AG04450 (cell line): ENCODE measurements at regions of chr13 and their contacts with region 1.

Region 1: GRCh38 chr13:106536244-106537034 is 977 bp upstream of the EFNB2 start:
- DNase-seq: peak; percentile 72
- H3K4me3 ChIP-seq: peak overlapping the region; percentile 71
- H3K27ac ChIP-seq: no peak overlapping the region
- H3K27me3 ChIP-seq: no peaks in the 10 kb centered on the region
- CTCF ChIP-seq: peak; percentile 97

Region 2: GRCh38 chr13:104571161-104571892 is 1965.1 kb before region 1 on chr13:
- CTCF ChIA-PET with region 1: interaction called, 46 read pairs
- POLR2A ChIA-PET with region 1: no interaction called
- DNase-seq: peak; percentile 41
- H3K4me3 ChIP-seq: peak overlapping the region; percentile 33
- H3K27ac ChIP-seq: no peak overlapping the region
- H3K27me3 ChIP-seq: no peaks in the 10 kb centered on the region
- CTCF ChIP-seq: peak; percentile 92

Region 3: DNA sequence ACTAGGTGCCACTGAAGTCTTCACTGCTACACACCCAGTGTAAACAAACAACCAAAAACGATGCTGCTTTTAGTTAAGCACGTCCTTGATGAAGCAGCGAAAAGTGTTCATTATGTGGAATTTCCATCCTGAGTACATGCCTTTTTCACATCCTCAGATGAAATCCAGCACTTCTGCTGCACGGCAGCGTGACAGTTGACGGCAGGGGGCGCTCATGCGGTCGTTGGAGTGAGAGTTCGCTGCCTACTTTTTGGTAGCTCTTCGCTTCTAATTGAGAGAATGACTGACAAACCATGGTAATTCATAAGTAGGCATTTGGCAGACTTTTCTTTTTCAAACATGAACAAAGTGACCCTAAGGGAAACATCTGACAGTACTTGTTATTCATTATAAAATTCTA is 1125.8 kb before region 1 on chr13:
- CTCF ChIA-PET with region 1: interaction called, 11 read pairs
- POLR2A ChIA-PET with region 1: interaction called, 3 read pairs
- DNase-seq: no peak
- H3K4me3 ChIP-seq: peak overlapping the region; percentile 37
- H3K27ac ChIP-seq: no peak overlapping the region
- H3K27me3 ChIP-seq: no peaks in the 10 kb centered on the region
- CTCF ChIP-seq: peak; percentile 70

Region 4: GRCh38 chr13:106567474-106568298 is 31.2 kb after region 1 on chr13 and contains the start of gene ARGLU1:
- CTCF ChIA-PET with region 1: interaction called, 12 read pairs
- POLR2A ChIA-PET with region 1: interaction called, 6 read pairs
- DNase-seq: peak; percentile 79
- H3K4me3 ChIP-seq: peak within 1 kb of the TSS; percentile 83
- H3K27ac ChIP-seq: peak within 1 kb of the TSS; percentile 92
- H3K27me3 ChIP-seq: no peaks in the 10 kb centered on the region
- CTCF ChIP-seq: no peak
- polyA plus RNA-seq, gene ARGLU1: 53.3 and 80.3 TPM in 2 replicates

Region 5: GRCh38 chr13:107144432-107144831 is 608.0 kb after region 1 on chr13:
- CTCF ChIA-PET with region 1: interaction called, 19 read pairs
- POLR2A ChIA-PET with region 1: no interaction called
- DNase-seq: no peak
- H3K4me3 ChIP-seq: no peak overlapping the region
- H3K27ac ChIP-seq: no peak overlapping the region
- H3K27me3 ChIP-seq: no peaks in the 10 kb centered on the region
- CTCF ChIP-seq: peak; percentile 29; the same call in 1 of the 2 replicates